ENCODE measurements at regions of chr17 and their contacts with region 1.

Region 1: DNA sequence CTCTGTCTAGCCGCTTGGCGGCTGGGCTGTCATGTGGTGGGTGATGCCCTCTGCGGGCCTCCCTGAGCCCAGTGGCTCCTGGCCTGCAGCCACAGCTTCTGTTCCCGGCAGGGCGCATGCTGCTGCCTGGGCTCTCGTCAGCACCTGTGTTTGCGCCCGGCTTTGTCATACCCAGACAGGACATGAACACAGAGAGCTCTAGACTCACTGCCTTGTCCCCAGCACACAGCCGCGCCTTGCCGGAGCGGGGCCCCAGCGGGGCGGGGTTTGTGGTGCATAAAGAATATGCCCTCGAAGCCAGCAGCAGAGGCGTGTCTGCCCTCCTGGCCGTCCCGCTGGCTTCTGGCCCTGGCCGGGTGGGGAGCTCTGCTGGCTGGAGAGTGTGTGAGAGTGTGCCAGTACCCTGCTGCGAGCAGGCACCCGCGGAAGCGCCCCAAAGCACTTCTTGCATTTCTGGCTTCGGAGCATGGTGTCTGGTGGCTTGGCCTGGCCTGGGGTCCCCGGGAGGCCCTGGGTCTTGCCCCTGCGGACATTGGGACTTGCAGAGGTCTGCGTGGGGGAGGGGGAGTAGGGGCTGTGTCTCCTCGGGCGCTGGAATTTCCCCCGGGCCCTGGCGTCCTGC is 14.4 kb downstream of the ASPSCR1 start:
- DNase-seq: no peak
- H3K4me3 ChIP-seq: no peak overlapping the region
- H3K27ac ChIP-seq: no peak overlapping the region
- H3K4me1 ChIP-seq: peaks cover 0 to 16% (median 6%) of the 10 kb centered on the region in 6 donors
- H3K27me3 ChIP-seq: no peaks in the 10 kb centered on the region
- CTCF ChIP-seq: no peak
- POLR2A ChIP-seq: no peak

Region 2: DNA sequence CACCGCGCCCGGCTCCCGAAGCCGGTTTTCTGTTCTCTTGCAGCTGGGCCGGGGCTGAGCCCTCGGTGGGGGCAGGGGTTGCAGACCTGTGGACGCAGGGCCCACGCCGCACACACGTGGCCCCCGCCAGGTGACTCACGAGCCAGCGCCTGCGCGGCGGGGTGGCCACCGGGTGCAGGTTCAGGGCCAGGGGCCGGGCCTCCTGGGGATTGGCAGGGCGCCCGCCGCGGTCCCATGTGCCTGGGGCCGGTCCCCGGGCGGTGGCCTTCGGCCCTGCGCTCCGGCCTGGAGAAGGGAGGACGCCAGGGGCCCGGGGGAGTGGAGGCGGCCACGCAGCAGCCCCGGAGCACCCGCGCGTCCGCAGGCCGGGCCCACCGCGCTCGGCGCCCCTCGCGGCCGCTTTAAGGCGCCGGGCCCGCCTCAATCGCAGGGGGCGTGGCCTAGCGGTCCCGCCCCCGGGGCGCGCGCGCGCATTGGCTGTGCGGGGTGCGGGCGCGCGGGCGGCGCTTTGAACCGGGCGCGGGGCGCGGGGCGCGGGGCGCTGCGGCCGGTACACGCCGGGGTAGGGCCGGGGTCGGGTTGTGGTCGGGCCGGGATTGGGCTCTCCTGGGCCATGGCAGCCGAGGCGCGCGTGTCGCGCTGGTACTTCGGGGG is 279.9 kb before region 1 on chr17 and contains the start of gene SLC25A10:
- intact Hi-C with region 1: no loop called
- DNase-seq: peak; percentile 92
- H3K4me3 ChIP-seq: peak within 1 kb of the TSS; percentile 66 to 99 (median 90)
- H3K27ac ChIP-seq: peak within 1 kb of the TSS in 5 of 8 donors; percentile 54 to 82 (median 77)
- H3K4me1 ChIP-seq: peaks cover 22 to 57% (median 34%) of the 10 kb centered on the region in 6 donors
- H3K27me3 ChIP-seq: no peaks in the 10 kb centered on the region
- CTCF ChIP-seq: peak in 4 of 11 experiments; percentile 23 to 40 (median 26)
- POLR2A ChIP-seq: no peak
- total RNA-seq, gene SLC25A10: 2.9 to 7.5 (median 3.7) TPM

Region 3: GRCh38 chr17:81902023-81902652 is 89.7 kb before region 1 on chr17 and contains the start of gene NPB:
- intact Hi-C with region 1: no loop called
- DNase-seq: no peak
- H3K4me3 ChIP-seq: peak within 1 kb of the TSS in 7 of 8 donors; percentile 1 to 63 (median 25)
- H3K27ac ChIP-seq: peak within 1 kb of the TSS in 1 of 8 donors; percentile 1
- H3K4me1 ChIP-seq: peaks cover 0 to 24% (median 18%) of the 10 kb centered on the region in 6 donors
- H3K27me3 ChIP-seq: peaks cover 0 to 29% (median 16%) of the 10 kb centered on the region in 7 donors
- CTCF ChIP-seq: no peak
- POLR2A ChIP-seq: no peak
- total RNA-seq, gene NPB: 0.23 to 2.9 (median 0.74) TPM in 6 of 7 donors, not detected in the other

Region 4: GRCh38 chr17:81947189-81947588 is 44.6 kb before region 1 on chr17 and contains the start of gene MYADML2:
- intact Hi-C with region 1: loop called (anchors 2 kb)
- DNase-seq: no peak
- H3K4me3 ChIP-seq: no peak within 1 kb of the TSS
- H3K27ac ChIP-seq: no peak within 1 kb of the TSS
- H3K4me1 ChIP-seq: no peaks in the 10 kb centered on the region
- H3K27me3 ChIP-seq: peaks cover 0 to 28% (median 0%) of the 10 kb centered on the region in 7 donors
- CTCF ChIP-seq: no peak
- POLR2A ChIP-seq: no peak
- total RNA-seq, gene MYADML2: not detected

Region 5: GRCh38 chr17:82051776-82052637 is 60.2 kb after region 1 on chr17 and contains the starts of genes GPS1 and RFNG:
- intact Hi-C with region 1: no loop called
- DNase-seq: peak; percentile 96
- H3K4me3 ChIP-seq: peak within 1 kb of the TSS; percentile 69 to 94 (median 78)
- H3K27ac ChIP-seq: peak within 1 kb of the TSS in 7 of 8 donors; percentile 46 to 86 (median 70)
- H3K4me1 ChIP-seq: peaks cover 20 to 73% (median 42%) of the 10 kb centered on the region in 6 donors
- H3K27me3 ChIP-seq: no peaks in the 10 kb centered on the region
- CTCF ChIP-seq: no peak
- POLR2A ChIP-seq: no peak
- total RNA-seq, gene GPS1: 61.5 to 77.2 (median 66.5) TPM
- total RNA-seq, gene RFNG: 21.4 to 36.3 (median 26.0) TPM

Region 6: DNA sequence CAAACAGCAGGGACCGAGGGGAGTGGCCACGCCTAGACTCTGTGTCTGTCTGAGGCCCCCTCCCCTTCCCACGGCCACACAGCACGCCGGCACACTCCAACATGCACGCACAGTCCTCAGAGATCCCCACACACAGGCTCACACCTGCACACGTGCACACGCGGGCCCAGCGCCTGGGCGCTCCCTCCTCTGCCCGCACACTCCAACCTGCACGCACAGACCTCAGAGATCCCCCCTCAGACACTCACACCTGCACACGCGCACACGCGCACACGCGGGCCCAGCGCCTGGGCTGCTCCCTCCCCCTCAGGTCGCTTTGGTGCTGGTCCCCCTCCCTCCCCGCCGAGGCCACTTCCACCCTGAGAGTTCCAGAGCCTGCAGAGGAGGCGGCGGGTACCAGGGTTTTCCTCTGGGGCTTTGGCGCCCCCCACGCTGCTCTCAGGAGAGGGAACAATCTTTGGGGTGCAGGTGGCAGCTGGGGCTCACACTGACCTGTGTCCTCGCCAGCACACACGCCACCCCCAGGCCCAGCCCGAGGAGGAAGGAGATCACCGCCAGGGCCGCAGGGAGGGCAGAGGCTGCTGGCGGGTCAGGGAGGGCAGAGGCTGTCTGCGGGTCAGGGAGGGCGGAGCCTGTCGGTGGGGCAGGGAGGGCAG is 324.0 kb after region 1 on chr17:
- intact Hi-C with region 1: no loop called
- DNase-seq: peak; percentile 87
- H3K4me3 ChIP-seq: peak overlapping the region in 7 of 8 donors; percentile 17 to 69 (median 34)
- H3K27ac ChIP-seq: peak overlapping the region in 6 of 8 donors; percentile 5 to 88 (median 74)
- H3K4me1 ChIP-seq: peaks cover 0 to 39% (median 25%) of the 10 kb centered on the region in 6 donors
- H3K27me3 ChIP-seq: peaks cover 0 to 59% (median 21%) of the 10 kb centered on the region in 7 donors
- CTCF ChIP-seq: peak in 1 of 11 experiments; percentile 7
- POLR2A ChIP-seq: no peak

Measured in spleen (tissue), 13 donors.